ENCODE measurements at regions of chr1 and their contacts with region 1.

Region 1: DNA sequence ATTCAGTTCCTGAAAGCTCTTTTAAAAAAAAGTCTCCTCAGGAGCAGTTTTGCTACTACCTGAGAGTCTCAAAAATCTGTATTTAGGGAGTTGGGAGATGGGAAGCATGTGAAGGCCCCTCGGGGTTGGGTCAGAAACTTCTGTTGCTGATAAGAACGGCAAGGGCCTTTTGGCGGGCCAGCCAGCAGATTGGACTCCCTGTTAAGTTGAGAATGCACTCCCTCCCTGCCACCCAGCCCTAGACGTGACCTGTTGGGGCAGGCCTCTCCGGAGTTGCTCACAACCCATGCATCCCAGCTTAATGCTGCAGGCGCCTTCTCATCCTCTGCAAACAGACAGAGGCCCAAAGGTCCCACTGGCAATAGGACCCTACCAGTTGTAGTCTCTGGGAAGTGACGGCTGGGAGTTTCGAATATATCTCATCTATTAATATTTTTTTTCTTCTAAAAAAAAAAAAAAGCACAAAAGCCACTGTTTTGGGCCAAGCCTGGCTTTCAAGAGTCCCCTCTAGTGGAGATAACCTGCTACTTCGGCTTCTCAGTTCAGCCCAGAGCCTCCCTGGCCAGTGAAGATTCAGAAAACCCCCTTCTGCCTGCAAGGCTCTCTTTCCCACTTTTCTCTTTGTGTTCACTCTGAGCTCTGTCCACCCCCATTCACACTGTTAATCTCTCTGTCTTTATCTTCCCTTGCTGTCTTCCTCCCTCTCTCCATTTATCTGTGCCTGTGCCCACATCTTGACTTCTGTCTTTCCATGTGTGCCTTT is 5.3 kb downstream of the PLXNA2 start:
- DNase-seq: peak in 4 of 5 donors; percentile 44 to 79 (median 61)
- H3K4me3 ChIP-seq: no peak overlapping the region
- H3K27ac ChIP-seq: peak overlapping the region in 1 of 2 donors; percentile 69
- H3K4me1 ChIP-seq: peaks cover 4 to 40% (median 22%) of the 10 kb centered on the region in 3 donors
- H3K27me3 ChIP-seq: no peaks in the 10 kb centered on the region
- CTCF ChIP-seq: peak; percentile 70

Region 2: DNA sequence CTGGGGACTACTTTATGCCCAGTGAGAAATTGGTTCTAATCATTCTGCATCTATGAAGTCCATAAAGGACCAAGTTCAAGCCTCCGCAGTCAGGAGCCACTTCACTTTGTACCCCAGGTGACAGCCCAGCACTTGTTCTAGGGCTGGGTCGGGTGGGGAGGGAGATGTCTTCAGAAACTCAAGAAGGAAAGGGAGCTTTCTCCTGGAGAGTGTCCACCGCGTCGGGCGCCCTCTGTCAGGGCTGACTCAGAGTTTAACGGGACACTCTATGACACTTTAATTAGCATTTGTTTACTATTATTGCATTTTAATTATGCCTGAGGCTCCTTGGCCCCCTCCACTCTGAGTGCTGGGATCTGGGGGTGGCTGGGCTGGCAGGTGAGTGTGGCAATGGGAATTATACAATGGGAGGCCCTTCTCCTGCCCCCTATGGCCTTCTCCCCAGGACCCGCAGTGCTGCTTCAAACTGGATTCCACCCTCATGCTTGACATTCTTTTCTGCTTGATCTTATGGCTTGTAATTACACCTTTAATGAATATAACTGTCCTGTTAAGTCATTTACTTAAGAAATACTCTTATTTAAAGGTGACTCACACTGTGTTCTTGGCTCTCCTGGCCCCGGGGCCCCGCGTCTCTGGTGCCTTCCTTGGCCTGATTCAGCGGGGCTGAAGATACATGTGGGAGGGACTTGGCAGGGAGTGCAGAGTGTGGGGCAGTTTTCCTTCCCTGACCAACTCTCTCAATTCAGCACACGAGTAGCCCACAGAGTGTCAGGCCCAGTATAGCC is 131.3 kb before region 1 on chr1:
- intact Hi-C with region 1: no loop called
- DNase-seq: no peak
- H3K4me3 ChIP-seq: no peak overlapping the region
- H3K27ac ChIP-seq: no peak overlapping the region
- H3K4me1 ChIP-seq: no peaks in the 10 kb centered on the region
- H3K27me3 ChIP-seq: no peaks in the 10 kb centered on the region
- CTCF ChIP-seq: no peak

Region 3: GRCh38 chr1:208132287-208132883 is 106.5 kb before region 1 on chr1:
- intact Hi-C with region 1: loop called (anchors 10 kb)
- DNase-seq: peak; percentile 73 to 87 (median 80)
- H3K4me3 ChIP-seq: no peak overlapping the region
- H3K27ac ChIP-seq: no peak overlapping the region
- H3K4me1 ChIP-seq: peaks cover 0 to 7% (median 3%) of the 10 kb centered on the region in 3 donors
- H3K27me3 ChIP-seq: no peaks in the 10 kb centered on the region
- CTCF ChIP-seq: peak; percentile 84

Region 4: GRCh38 chr1:208381481-208381880 is 142.6 kb after region 1 on chr1:
- intact Hi-C with region 1: no loop called
- DNase-seq: no peak
- H3K4me3 ChIP-seq: no peak overlapping the region
- H3K27ac ChIP-seq: no peak overlapping the region
- H3K4me1 ChIP-seq: peaks cover 0 to 3% (median 0%) of the 10 kb centered on the region in 3 donors
- H3K27me3 ChIP-seq: no peaks in the 10 kb centered on the region
- CTCF ChIP-seq: no peak

Measured in kidney (tissue), 22 donors.